ENCODE measurements at regions of chr15 and their contacts with region 1.

Region 1: DNA sequence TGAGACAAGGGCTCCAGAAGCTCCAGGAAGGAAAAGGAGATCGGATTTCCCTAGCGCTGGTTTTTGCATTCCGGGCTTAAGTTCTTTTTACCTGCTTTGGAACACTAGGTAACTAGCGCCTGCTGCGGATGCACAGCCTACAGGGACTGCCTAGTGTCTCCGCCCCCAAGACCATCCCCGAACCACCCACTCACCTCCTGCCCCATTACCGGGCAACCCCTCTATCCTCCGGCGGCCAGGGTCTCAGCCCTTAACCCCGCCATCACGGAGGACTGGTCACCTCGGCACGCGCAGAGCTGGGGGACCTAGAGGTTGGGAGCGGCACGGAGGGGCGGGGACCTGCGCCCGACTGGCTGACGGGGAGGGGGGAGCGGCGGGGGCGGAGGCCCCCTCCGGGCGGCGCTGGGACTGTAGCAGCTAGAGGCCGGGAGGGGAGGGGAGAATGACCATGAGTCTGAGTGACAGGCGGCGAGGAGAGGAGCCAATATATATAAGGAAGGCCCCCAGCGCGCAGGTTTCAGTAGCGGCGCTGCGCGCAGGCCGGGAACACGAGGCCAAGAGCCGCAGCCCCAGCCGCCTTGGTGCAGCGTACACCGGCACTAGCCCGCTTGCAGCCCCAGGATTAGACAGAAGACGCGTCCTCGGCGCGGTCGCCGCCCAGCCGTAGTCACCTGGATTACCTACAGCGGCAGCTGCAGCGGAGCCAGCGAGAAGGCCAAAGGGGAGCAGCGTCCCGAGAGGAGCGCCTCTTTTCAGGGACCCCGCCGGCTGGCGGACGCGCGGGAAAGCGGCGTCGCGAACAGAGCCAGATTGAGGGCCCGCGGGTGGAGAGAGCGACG is at the start of gene DLL4:
- DNase-seq: peak; percentile 77
- ATAC-seq: peak; percentile 49
- H3K4me3 ChIP-seq: peak within 1 kb of the TSS; percentile 76
- H3K27ac ChIP-seq: no peak within 1 kb of the TSS
- H3K4me1 ChIP-seq: peaks cover 45% of the 10 kb centered on the region
- H3K27me3 ChIP-seq: peaks cover 25% of the 10 kb centered on the region
- CTCF ChIP-seq: no peak
- total RNA-seq, gene DLL4: 2.2 and 2.9 TPM in 2 replicates

Region 2: DNA sequence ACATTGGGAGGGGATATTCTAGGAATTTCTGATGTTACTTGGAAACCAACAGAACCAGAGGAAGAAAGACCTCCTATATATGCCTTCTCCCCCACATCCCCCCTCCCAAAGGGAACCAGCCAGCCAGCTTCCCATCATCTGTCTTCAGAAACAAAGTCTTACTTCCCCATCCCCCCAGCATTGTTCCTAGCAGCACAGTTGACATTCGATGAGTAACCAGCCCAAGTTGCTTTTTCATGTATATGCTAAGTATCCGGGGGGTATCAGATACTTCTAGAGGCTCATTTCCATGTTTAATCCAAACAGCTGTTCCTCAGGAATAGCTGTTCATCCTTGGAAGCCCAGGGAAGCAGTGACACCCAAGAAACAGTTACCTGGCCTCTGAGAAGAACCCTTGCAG is 190.0 kb before region 1 on chr15:
- CTCF ChIA-PET with region 1: interaction called, 10 read pairs
- POLR2A ChIA-PET with region 1: no interaction called
- intact Hi-C with region 1: no loop called
- DNase-seq: no peak
- ATAC-seq: no peak
- H3K4me3 ChIP-seq: no peak overlapping the region
- H3K27ac ChIP-seq: no peak overlapping the region
- H3K4me1 ChIP-seq: peaks cover 18% of the 10 kb centered on the region
- H3K27me3 ChIP-seq: no peaks in the 10 kb centered on the region
- CTCF ChIP-seq: no peak